ENCODE measurements at regions of chr4 and their contacts with region 1.

Region 1: DNA sequence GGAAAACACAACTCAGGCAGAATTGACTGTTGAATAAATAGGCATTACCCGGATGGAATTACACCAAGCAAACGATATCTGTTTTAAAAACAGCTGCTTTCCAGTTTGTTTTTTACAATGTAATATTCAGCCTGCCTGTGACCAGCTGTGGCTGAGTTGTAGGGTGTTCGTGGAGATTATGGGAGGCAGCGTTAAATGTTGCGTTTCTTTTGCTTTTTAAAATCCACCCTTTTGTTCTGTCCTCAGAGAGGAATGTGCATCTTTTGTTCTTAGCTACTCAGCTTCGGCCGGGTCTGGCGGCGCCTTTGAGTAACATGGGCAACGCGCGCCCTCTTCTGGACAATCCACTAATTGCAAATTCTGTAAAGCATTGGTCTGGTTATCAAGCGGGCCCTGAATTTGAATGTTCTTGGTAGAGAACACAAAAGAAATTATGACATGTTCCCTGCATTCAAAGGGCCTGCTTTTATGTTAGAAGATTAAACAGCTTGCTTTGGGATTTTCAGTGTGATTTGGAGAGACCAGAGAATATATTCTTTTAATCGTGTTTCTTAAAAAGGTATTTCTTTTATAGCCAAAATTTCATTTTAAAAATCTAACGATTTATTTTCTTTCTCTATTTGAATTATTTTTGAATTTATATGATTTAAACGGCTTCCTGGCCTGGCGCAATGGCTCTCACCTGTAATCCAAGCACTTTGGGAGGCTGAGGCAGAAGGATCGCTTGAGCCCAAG is 76.3 kb upstream of the TRIM2 start:
- DNase-seq: peak; percentile 78
- H3K4me3 Mint-ChIP-seq: no peak overlapping the region
- H3K27ac Mint-ChIP-seq: no peak overlapping the region
- H3K4me1 Mint-ChIP-seq: no peaks in the 10 kb centered on the region
- H3K27me3 Mint-ChIP-seq: no peaks in the 10 kb centered on the region
- CTCF ChIP-seq: peak; percentile 39

Region 2: DNA sequence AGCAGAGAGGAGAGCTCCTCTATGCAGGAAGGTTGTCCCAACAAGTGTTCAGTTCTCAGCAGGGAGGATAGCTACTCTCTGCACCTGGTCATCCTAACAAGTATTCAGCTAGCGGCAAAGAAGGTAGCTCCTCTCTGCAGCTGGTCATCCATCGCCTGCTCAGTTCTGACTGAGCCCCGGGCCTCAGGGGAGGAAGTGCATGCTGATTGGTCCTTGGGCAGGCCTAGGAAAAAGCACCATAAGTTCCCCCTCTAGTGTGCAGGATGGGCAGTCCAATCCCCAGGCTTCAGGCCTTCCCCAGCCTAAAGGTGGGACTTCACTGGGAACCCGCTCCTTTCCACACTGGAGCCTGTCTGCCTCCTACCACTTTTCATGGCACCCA is 587.6 kb before region 1 on chr4:
- CTCF ChIA-PET with region 1: no interaction called
- intact Hi-C with region 1: no loop called
- DNase-seq: no peak
- H3K4me3 Mint-ChIP-seq: no peak overlapping the region
- H3K27ac Mint-ChIP-seq: no peak overlapping the region
- H3K4me1 Mint-ChIP-seq: peaks cover 15% of the 10 kb centered on the region
- H3K27me3 Mint-ChIP-seq: no peaks in the 10 kb centered on the region
- CTCF ChIP-seq: no peak

Region 3: DNA sequence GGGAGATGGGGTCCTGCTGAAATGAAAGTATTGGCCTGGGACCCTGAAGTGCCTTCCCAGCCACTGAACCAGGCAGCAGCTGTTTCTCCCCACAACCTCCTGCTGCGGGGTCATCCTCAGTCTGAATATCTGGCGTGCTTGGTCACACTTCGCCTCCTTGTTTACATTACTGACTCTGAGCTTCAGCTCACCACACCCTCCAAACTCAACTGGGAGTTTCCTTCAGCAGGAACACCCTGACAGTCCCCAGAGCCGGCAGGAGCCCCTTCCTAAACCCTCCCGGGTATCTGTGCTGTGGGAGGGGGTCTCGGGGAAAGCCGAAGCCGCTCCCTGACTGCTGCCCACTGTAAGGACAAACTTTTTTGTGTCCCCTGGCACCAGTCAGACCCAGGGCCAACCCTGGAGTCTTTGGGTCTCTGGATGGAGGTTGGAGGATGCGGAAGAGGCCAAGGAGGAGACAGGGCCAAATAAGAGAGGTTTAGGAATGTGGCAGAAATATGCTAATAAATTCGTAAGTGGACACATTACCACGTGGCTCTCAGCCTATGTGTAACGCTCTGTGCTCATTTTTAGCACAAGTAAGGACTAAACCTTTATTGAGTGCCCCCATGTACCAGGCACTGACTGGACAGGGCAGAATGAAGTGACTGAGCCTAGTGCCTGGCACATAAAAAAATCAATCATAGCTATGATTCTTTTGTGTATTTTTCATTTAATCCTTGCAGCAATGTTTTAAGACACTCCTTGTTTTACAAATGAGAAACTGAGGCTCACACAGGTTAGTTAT is 171.1 kb before region 1 on chr4:
- CTCF ChIA-PET with region 1: no interaction called
- intact Hi-C with region 1: loop called (anchors 10 kb)
- DNase-seq: peak; percentile 8
- H3K4me3 Mint-ChIP-seq: no peak overlapping the region
- H3K27ac Mint-ChIP-seq: no peak overlapping the region
- H3K4me1 Mint-ChIP-seq: peaks cover 21% of the 10 kb centered on the region
- H3K27me3 Mint-ChIP-seq: no peaks in the 10 kb centered on the region
- CTCF ChIP-seq: no peak

Region 4: DNA sequence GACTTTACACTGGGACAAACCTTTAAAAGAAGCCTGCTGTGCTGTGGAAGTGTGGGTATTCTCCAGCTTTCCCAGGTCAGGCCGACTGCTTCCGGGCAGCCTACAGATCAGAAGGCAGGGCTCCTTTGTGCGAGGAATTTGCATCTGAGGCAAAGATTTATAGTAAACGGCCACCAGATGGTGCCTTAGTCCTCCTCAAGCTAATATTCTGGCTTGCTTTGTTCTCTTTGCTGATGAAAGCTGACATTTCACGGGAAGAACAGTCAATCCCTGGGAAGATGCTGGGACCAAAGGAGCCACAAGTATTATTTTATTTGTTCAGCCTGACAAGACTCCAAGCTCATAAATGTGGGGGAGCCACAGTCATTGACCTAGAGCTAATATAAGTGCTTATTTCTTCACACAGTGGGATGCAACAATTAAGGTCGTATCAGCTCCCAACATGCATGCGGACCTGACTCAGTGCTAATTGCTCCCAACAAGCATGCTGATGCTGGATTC is 44.4 kb before region 1 on chr4:
- CTCF ChIA-PET with region 1: interaction called, 36 read pairs
- intact Hi-C with region 1: loop called (anchors 1 kb)
- DNase-seq: peak; percentile 61
- H3K4me3 Mint-ChIP-seq: no peak overlapping the region
- H3K27ac Mint-ChIP-seq: peak overlapping the region; percentile 33
- H3K4me1 Mint-ChIP-seq: peaks cover 18% of the 10 kb centered on the region
- H3K27me3 Mint-ChIP-seq: no peaks in the 10 kb centered on the region
- CTCF ChIP-seq: peak; percentile 51

Region 5: DNA sequence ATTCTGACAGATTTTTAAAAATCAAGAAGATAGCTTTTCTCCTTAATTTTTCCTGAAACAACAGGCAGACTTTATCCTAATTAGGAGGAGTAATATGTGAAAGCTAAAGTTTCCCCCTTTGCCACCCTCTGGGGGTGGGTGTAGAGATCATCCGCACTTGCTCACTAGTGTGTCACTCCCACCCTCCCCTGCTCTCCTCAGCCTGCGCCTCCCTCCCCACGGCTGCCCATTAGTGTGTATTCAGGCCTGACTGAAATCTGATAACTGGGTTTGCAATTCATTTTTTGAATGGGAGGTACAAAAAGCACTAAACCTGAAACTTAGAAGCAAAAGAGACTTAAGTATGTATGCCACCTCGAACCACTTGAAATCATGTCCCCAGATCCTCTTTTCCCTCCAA is 34.1 kb before region 1 on chr4:
- CTCF ChIA-PET with region 1: no interaction called
- intact Hi-C with region 1: no loop called
- DNase-seq: no peak
- H3K4me3 Mint-ChIP-seq: no peak overlapping the region
- H3K27ac Mint-ChIP-seq: no peak overlapping the region
- H3K4me1 Mint-ChIP-seq: no peaks in the 10 kb centered on the region
- H3K27me3 Mint-ChIP-seq: no peaks in the 10 kb centered on the region
- CTCF ChIP-seq: no peak

Region 6: GRCh38 chr4:153374442-153374841 is 246.5 kb after region 1 on chr4:
- CTCF ChIA-PET with region 1: no interaction called
- intact Hi-C with region 1: no loop called
- DNase-seq: no peak
- H3K4me3 Mint-ChIP-seq: no peak overlapping the region
- H3K27ac Mint-ChIP-seq: no peak overlapping the region
- H3K4me1 Mint-ChIP-seq: no peaks in the 10 kb centered on the region
- H3K27me3 Mint-ChIP-seq: no peaks in the 10 kb centered on the region
- CTCF ChIP-seq: no peak

Measured in Calu3 (cell line).